ENCODE measurements at regions of chr19 and their contacts with region 1.

Region 1: GRCh38 chr19:39846176-39846677 is at the start of gene FBL:
- DNase-seq: peak; percentile 49 to 97
- H3K4me3 ChIP-seq: peak within 1 kb of the TSS; percentile 75 to 82
- H3K27ac ChIP-seq: peak within 1 kb of the TSS; percentile 77 to 86
- H3K4me1 ChIP-seq: peaks cover 9 to 27% of the 10 kb centered on the region in 2 donors
- H3K27me3 ChIP-seq: no peaks in the 10 kb centered on the region
- CTCF ChIP-seq: no peak
- total RNA-seq, gene FBL: 92.1 TPM

Region 2: DNA sequence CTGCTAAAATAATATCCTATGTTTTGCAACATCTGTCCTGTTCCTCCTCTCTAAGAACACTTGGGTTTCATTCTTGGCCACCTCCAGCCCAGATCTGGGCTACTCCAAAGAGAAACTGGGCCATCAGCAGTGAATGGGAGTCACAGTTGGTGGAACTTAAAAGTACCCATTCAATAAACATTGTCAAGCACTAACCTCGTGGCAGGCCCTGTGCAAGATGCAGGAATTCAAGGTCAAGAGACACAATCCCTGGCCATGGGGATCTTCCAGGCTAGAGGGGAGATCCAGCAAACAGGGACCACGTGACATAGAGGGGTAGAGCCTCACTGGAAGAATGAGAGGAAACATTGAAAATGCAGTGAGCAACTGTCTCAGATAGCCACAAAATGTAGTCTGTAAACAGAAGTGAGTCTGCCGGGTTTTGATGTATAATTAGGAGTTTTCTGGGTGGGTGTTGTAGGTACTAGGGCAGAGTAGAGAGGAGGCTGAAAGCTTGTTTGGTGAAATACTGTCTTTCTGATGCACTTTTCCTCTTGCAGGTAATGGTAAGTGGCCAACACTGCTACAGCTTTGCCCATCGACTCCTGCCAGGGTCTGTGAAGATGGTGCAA is 291.4 kb before region 1 on chr19:
- intact Hi-C with region 1: loop called (anchors 5 kb)
- DNase-seq: no peak
- H3K4me3 ChIP-seq: no peak overlapping the region
- H3K27ac ChIP-seq: no peak overlapping the region
- H3K4me1 ChIP-seq: no peaks in the 10 kb centered on the region
- H3K27me3 ChIP-seq: no peaks in the 10 kb centered on the region
- CTCF ChIP-seq: no peak

Region 3: GRCh38 chr19:39599116-39599515 is 247.1 kb before region 1 on chr19:
- intact Hi-C with region 1: no loop called
- DNase-seq: no peak
- H3K4me3 ChIP-seq: no peak overlapping the region
- H3K27ac ChIP-seq: no peak overlapping the region
- H3K4me1 ChIP-seq: no peaks in the 10 kb centered on the region
- H3K27me3 ChIP-seq: no peaks in the 10 kb centered on the region
- CTCF ChIP-seq: no peak

Region 4: GRCh38 chr19:39813264-39813993 is 32.8 kb before region 1 on chr19:
- intact Hi-C with region 1: no loop called
- DNase-seq: no peak
- H3K4me3 ChIP-seq: no peak overlapping the region
- H3K27ac ChIP-seq: no peak overlapping the region
- H3K4me1 ChIP-seq: no peaks in the 10 kb centered on the region
- H3K27me3 ChIP-seq: no peaks in the 10 kb centered on the region
- CTCF ChIP-seq: no peak

Region 5: GRCh38 chr19:39824143-39825092 is 21.8 kb before region 1 on chr19:
- intact Hi-C with region 1: loop called (anchors 1 kb)
- DNase-seq: peak; percentile 84 to 96
- H3K4me3 ChIP-seq: peak overlapping the region; percentile 86 to 87
- H3K27ac ChIP-seq: peak overlapping the region; percentile 60 to 72
- H3K4me1 ChIP-seq: no peaks in the 10 kb centered on the region
- H3K27me3 ChIP-seq: no peaks in the 10 kb centered on the region
- CTCF ChIP-seq: no peak

Region 6: DNA sequence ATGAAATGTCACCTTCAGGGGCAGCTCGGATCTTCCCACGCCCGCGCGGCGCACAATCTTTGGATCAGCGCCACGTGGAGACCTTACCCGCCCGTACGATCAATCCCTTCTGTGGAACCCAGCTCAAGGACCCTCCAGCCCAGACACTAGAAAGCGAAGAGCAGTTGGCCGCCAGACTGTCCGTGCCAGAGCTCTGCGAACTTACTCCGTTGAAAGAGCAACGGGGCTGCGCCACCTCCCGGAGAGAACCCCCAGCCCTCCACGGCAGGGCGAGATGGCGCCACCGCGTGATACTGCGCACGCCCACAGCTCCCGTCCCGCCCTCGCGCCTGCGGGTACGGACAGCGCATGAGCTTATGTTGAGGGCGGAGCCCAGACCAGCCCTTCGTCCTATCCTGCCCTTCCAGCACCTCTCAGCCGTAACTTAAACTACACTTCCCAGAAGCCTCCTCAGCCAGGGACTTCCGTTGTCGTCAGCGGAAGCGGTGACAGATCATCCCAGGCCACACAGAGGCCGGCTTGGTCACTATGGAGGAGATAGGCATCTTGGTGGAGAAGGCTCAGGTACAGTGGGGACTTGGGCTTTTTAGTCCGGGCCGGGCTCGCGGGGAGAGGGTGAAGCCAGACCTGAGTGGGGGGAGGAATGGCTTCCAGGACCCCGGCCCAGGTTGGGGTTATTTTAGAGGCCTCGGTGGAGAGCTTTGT is 124.6 kb after region 1 on chr19 and contains the start of gene PSMC4:
- intact Hi-C with region 1: loop called (anchors 2 kb)
- DNase-seq: peak; percentile 95 to 99
- H3K4me3 ChIP-seq: peak within 1 kb of the TSS; percentile 75 to 76
- H3K27ac ChIP-seq: peak within 1 kb of the TSS; percentile 86 to 90
- H3K4me1 ChIP-seq: peaks cover 0 to 14% of the 10 kb centered on the region in 2 donors
- H3K27me3 ChIP-seq: no peaks in the 10 kb centered on the region
- CTCF ChIP-seq: peak; percentile 66 to 78 (median 75)
- total RNA-seq, gene PSMC4: 122 TPM

Region 7: GRCh38 chr19:40221858-40222837 is 375.9 kb after region 1 on chr19:
- intact Hi-C with region 1: loop called (anchors 10 kb)
- DNase-seq: peak; percentile 55 to 90
- H3K4me3 ChIP-seq: no peak overlapping the region
- H3K27ac ChIP-seq: no peak overlapping the region
- H3K4me1 ChIP-seq: peaks cover 3 to 9% of the 10 kb centered on the region in 2 donors
- H3K27me3 ChIP-seq: peaks cover 29% of the 10 kb centered on the region
- CTCF ChIP-seq: peak; percentile 87 to 96 (median 92)

Region 8: DNA sequence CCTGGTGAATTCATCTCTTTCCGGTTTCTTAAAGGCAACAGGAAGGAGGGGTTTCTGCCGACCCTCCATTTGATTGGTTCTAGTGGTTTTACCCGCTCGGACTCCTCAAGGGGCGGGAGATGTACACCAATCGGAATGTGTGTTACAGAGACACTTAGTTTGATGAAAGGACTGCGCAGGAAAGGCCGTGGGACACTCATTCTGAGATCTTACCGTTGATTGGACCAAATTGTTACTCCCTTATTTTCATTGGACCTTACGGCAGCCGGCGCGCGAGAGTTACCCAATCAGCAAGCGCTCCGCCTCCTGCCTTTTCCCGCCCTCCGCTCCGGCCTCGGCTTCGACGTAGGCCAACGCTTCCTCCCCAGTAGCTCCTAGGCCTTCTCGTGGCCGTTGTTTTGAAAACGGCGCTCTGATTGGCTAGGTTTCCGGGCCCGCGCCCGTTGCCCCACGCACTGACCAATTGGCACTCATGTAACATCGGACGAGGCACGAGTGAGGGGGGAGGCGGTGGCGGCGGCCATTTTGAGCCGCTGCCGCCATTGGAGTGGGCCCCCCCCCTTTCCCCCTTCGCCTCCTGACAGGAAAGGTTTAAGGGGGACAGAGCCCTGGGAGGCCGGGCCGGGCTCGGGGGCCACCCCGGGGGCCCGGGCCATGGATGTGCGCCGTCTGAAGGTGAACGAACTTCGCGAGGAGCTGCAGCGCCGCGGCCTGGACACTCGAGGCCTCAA is 1417.8 kb after region 1 on chr19 and contains the start of gene HNRNPUL1:
- intact Hi-C with region 1: loop called (anchors 10 kb)
- DNase-seq: peak; percentile 97 to 99
- H3K4me3 ChIP-seq: peak within 1 kb of the TSS; percentile 81 to 82
- H3K27ac ChIP-seq: peak within 1 kb of the TSS; percentile 94 to 98
- H3K4me1 ChIP-seq: peaks cover 9 to 22% of the 10 kb centered on the region in 2 donors
- H3K27me3 ChIP-seq: no peaks in the 10 kb centered on the region
- CTCF ChIP-seq: peak; percentile 25 to 44 (median 40)
- total RNA-seq, gene HNRNPUL1: 81.1 TPM